Heart left ventricle (tissue), 16 donors: ENCODE measurements at regions of chr17 and their contacts with region 1.

Region 1: DNA sequence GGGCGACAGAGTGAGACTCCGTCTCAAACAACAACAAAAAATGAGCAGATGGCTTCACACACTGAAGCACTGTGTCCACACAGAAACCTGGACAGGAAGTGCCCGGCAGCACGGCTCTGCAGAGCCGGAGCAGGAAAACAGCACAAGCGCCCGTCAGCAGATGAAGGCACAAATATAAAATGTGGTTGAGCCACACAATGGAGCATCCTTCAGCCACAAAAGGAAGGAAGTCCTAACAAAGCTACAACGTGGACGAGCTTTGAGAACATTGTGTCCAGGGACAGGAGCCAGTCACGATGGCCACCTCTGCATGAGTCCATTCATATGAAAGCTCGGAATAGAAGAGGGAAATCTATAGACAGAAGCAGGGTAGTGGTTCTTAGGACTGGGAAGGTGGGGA is 15.7 kb downstream of the RHBDF2 start:
- DNase-seq: peak in 2 of 5 donors; percentile 64 to 73
- ATAC-seq: peak; percentile 70 to 81 (median 72)
- H3K4me3 ChIP-seq: no peak overlapping the region
- H3K27ac ChIP-seq: peak overlapping the region in 8 of 12 donors; percentile 30 to 79 (median 62)
- H3K4me1 ChIP-seq: peaks cover 0 to 85% (median 6%) of the 10 kb centered on the region in 12 donors
- H3K27me3 ChIP-seq: no peaks in the 10 kb centered on the region
- CTCF ChIP-seq: no peak
- POLR2A ChIP-seq: no peak

Region 2: GRCh38 chr17:76501018-76501826 is 15.7 kb after region 1 on chr17 and contains the start of gene RHBDF2:
- intact Hi-C with region 1: loop called in 3 of 10 experiments (anchors 1 to 2 kb)
- DNase-seq: peak; percentile 88 to 97 (median 92)
- ATAC-seq: peak; percentile 71 to 90 (median 85)
- H3K4me3 ChIP-seq: peak within 1 kb of the TSS; percentile 46 to 85 (median 80)
- H3K27ac ChIP-seq: peak within 1 kb of the TSS; percentile 72 to 96 (median 92)
- H3K4me1 ChIP-seq: peaks cover 10 to 71% (median 42%) of the 10 kb centered on the region in 12 donors
- H3K27me3 ChIP-seq: no peaks in the 10 kb centered on the region
- CTCF ChIP-seq: no peak
- POLR2A ChIP-seq: peak; percentile 28 to 94
- total RNA-seq, gene RHBDF2: 6.3 to 49.4 (median 14.1) TPM